ENCODE measurements at regions of chr3 and their contacts with region 1.

Region 1: DNA sequence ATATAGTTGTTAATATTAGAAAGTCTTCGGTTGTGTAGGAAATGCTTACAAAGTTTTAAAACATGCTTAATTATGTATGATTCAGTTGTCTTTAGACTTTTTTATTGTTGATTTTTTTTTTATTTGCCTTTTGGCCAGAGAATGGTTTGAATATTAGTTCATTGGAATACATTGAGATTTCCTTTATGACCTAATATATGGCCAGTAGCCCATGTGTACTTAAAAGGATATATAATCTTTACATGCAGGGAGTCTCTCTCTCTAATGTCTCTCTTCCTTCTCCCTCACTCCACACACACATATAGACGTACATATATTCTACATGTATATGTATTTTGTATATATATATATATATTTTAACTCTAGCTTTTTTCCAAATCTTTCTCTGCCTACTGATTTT is 67.3 kb upstream of the SKIL start:
- DNase-seq: no peak
- ATAC-seq: no peak
- H3K4me3 ChIP-seq: no peak overlapping the region
- H3K27ac ChIP-seq: no peak overlapping the region
- H3K4me1 ChIP-seq: no peaks in the 10 kb centered on the region
- H3K27me3 ChIP-seq: no peaks in the 10 kb centered on the region
- CTCF ChIP-seq: no peak

Region 2: GRCh38 chr3:170132335-170132734 is 157.9 kb before region 1 on chr3:
- CTCF ChIA-PET with region 1: no interaction called
- POLR2A ChIA-PET with region 1: interaction called, 25 read pairs
- in situ Hi-C with region 1: no loop called
- intact Hi-C with region 1: no loop called
- DNase-seq: no peak
- ATAC-seq: no peak
- H3K4me3 ChIP-seq: no peak overlapping the region
- H3K27ac ChIP-seq: no peak overlapping the region
- H3K4me1 ChIP-seq: no peaks in the 10 kb centered on the region
- H3K27me3 ChIP-seq: no peaks in the 10 kb centered on the region
- CTCF ChIP-seq: no peak